ENCODE measurements at regions of chr10 and their contacts with region 1.

Region 1: GRCh38 chr10:12333380-12334185 is 15.8 kb upstream of the CAMK1D start:
- DNase-seq: peak; percentile 97
- ATAC-seq: peak; percentile 97
- H3K4me3 ChIP-seq: no peak overlapping the region
- H3K27ac ChIP-seq: peak overlapping the region; percentile 57
- H3K4me1 ChIP-seq: peaks cover 5% of the 10 kb centered on the region
- H3K27me3 ChIP-seq: no peaks in the 10 kb centered on the region
- CTCF ChIP-seq: no peak
- POLR2A ChIP-seq: peak; percentile 77; the same call in 1 of the 2 replicates
- RAD21 ChIP-seq: peak; percentile 35; the same call in 1 of the 2 replicates

Region 2: DNA sequence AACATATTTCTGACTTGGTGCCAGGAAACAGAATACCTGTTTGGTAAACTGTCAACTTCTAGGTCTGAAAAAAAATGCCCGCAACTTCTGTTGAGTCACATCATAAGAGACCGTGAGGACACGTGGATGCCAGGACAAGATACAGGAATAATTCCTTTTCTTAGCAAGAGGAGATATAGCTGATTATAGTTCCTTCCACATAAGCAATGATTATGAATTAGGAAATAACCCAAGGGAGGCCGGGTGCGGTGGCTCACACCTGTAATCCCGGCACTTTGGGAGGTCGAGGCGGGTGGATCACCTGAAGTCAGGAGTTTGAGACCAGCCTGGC is 62.4 kb before region 1 on chr10:
- CTCF ChIA-PET with region 1: no interaction called
- POLR2A ChIA-PET with region 1: no interaction called
- dilution Hi-C with region 1: no loop called
- in situ Hi-C with region 1: no loop called
- intact Hi-C with region 1: loop called (anchors 5 kb)
- DNase-seq: no peak
- ATAC-seq: peak; percentile 33; the same call in 1 of the 2 replicates
- H3K4me3 ChIP-seq: no peak overlapping the region
- H3K27ac ChIP-seq: no peak overlapping the region
- H3K4me1 ChIP-seq: 0 out of 2 replicates have a peak, but pooled peaks cover 1% of the 10 kb centered on the region
- H3K27me3 ChIP-seq: no peaks in the 10 kb centered on the region
- CTCF ChIP-seq: no peak
- POLR2A ChIP-seq: no peak
- RAD21 ChIP-seq: no peak